ENCODE measurements at regions of chr13 and their contacts with region 1.

Region 1: DNA sequence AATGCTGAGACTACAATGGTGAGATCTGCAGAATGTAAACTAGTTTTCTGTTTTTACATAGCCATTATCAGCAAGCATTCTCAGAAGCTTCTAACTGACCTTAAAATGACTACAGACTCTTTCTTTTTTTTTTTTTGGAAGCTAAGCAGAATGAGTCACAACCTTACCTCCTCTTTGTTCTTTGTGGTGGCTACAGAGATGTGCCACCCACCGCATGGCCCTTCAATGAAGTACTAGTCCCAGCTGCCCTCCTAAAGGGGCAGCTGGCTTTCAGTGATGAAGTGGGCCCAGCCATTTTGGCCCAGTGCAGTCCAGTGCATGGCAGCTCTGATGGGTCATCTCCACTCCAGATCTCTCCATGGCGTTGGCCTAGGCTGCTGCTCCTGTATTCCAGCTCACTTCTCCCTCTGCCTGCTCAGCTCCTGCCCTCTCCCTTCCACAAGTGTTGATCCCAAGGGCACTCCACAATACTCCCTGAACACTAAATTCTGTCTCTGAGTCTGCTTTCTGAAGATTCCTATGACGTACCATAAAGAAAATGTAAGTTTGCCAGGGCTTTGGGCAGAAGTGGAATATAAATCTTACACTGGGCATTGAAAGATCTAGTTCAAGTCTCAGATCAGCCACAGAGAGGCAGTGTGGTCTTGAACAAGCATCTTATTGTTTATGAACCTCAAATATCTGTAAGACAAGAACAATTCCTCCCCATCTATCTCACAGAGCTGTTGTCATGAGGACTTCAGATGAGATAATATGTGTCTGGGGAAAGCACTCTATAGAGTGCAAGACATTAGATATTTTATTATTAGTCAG is 85.6 kb downstream of the RXFP2 start:
- DNase-seq: no peak
- ATAC-seq: peak; percentile 64

Region 2: GRCh38 chr13:31476266-31476665 is 348.6 kb before region 1 on chr13:
- intact Hi-C with region 1: no loop called
- DNase-seq: peak; percentile 69
- ATAC-seq: peak; percentile 62

Region 3: DNA sequence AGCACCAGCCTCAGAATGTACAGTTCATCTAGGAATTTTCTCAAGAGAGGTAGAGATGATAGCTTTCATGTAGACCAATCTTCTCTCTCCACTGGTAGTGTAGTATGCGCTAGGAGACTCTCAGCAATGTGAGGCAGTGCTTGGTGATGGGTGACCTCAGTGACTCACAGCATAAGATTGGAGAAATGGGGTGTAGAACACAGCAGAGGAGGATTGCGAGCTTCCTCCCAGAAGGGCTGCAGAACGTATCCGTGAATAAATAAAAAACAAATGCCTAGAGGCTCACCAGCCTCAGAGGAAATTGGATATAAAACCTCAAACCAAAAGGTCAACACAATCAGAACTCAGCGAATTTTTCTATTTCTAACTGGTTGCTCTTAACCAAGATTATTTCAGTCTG is 268.5 kb before region 1 on chr13:
- intact Hi-C with region 1: no loop called
- DNase-seq: no peak
- ATAC-seq: no peak

Region 4: DNA sequence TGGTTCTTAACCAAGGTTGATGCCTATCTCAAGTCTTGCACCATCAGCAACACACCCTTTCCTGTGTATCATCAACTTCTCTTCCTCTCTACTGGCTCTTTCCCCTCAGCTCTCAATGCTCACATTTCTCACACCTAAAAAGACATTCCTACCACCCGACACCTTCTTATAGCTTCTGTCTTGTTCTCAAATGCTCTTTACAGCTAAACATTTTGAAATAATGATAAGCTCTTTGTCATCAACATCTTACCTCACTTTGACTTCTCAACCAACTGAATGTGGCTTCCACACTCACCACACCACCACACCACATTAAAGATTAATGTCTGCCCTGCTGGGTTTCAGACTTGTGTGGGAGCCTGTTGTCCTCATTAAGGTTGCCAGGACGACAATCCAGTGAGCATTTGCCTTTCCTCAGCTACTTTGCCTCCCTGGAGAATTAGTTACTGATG is 17.8 kb before region 1 on chr13:
- intact Hi-C with region 1: no loop called
- DNase-seq: no peak
- ATAC-seq: no peak

Region 5: DNA sequence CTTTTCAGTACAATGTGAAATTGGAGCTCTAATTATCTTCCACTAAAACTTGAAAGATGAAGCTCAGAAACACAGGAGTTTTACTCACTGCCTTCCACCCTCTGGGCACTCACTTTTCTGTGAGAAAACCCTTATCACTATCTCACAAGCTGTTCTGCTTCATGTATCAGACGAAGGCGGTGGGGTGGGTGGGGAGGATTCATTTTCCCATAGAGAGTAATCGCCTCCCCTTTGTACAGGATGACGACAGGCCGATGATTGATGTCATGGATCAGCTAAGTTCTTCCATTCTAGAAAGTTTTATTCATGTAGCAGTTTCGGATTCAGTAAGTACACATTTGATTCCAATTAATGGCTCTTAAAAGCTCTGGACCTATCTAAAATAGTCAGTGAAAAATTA is 350.4 kb after region 1 on chr13:
- intact Hi-C with region 1: loop called (anchors 10 kb)
- DNase-seq: no peak
- ATAC-seq: no peak

Region 6: GRCh38 chr13:32315238-32316027 is 490.5 kb after region 1 on chr13 and contains the starts of genes BRCA2 and ZAR1L:
- intact Hi-C with region 1: loop called (anchors 10 kb)
- DNase-seq: peak; percentile 98
- ATAC-seq: peak; percentile 97
- total RNA-seq, gene BRCA2: 0.87 TPM
- total RNA-seq, gene ZAR1L: not detected